ENCODE measurements at regions of chr1 and their contacts with region 1.

Region 1: GRCh38 chr1:27044613-27045151 is 32.0 kb upstream of the TENT5B start:
- DNase-seq: peak; percentile 77
- H3K27ac ChIP-seq: peak overlapping the region; percentile 18; the same call in 1 of the 2 replicates
- CTCF ChIP-seq: peak; percentile 91

Region 2: DNA sequence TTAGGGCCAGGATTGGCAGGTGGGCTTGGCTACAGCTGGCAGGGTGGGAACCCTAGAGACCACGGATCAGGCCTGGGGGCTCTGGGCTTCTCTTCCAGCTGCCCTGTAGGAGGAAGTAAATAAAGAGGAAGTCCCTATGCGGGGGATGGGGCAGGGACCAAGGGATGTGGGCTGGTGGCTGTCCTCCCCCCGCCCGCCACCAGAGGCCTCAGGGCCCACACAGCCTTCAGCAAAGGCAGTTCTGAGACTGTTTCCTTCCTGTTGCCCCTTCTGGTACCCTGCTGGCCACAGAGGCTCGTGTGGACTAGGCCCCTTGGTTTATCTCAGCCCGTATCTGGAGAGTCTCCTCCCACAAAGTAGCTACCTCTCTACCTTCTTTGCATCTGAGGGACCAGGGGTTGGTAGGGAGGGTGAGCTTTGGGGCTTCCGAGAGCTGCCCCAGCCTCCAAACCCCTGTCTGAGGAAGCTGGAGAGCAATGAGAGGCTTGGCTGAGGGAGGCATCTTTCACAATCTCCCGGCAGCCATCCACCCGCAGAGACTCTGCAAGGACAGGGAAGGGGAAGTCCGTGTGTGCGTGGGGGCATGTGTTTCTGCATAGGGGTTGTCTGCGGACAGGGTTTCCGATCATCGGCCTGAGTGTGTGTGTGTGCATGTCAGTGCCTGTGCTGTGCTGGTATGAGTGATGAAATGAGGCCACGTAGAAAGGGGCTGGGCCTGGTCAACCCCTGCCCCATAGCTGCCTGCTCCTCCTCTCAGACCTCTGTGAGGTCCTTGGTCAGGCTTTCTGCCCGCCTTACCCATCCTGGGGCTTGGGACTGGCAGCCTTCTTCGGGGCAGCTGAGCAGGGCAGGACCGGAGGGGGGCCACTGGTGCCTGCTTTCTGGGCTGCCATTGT is 502.6 kb before region 1 on chr1:
- CTCF ChIA-PET with region 1: no interaction called
- POLR2A ChIA-PET with region 1: no interaction called
- DNase-seq: peak; percentile 47
- H3K27ac ChIP-seq: peak overlapping the region; percentile 90
- CTCF ChIP-seq: no peak

Region 3: GRCh38 chr1:27031235-27032118 is 13.2 kb before region 1 on chr1:
- CTCF ChIA-PET with region 1: interaction called, 12 read pairs
- POLR2A ChIA-PET with region 1: no interaction called
- DNase-seq: peak; percentile 89
- H3K27ac ChIP-seq: peak overlapping the region; percentile 95
- CTCF ChIP-seq: no peak

Region 4: DNA sequence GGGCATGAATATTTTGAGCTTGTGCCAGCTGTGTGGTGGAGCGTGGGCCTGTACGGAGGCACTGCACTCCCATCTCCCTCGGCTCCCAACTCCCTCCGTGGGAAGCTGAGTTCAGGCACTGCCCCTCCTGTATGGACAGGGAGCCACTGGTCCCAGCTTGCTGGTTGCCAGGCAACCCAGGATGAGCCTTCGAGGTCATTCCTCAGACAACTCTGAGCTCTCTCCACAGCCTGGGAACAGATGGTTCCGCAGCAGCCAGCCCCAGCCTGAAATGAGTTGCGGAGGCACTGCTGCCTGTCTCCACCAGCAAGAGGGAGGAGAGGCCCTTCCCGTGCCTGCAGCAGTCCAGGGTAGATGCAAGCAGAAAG is 26.4 kb after region 1 on chr1:
- CTCF ChIA-PET with region 1: interaction called, 12 read pairs
- POLR2A ChIA-PET with region 1: no interaction called
- DNase-seq: peak; percentile 16
- H3K27ac ChIP-seq: peak overlapping the region; percentile 64
- CTCF ChIP-seq: no peak

Region 5: DNA sequence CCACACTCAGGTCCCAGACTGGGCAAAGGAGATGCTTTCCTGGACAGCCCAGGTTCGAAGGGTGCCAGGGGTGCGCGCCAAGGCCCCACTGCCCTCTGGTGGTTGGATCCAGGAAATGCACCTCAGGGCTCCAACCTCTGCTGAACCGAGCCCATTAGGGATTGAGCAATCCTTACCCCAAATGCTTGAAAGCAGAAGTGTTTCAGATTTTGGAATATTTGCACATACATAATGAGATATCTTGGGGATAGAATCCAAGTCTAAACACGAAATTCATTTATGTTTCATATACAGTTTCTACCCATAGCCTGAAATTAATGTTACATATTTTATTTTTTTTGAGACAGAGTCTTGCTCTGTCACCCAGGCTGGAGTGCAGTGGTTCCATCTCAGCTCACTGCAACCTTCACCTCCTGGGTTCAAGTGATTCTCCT is 52.8 kb after region 1 on chr1:
- CTCF ChIA-PET with region 1: interaction called, 166 read pairs
- POLR2A ChIA-PET with region 1: no interaction called
- DNase-seq: peak; percentile 90
- H3K27ac ChIP-seq: peak overlapping the region; percentile 96
- CTCF ChIP-seq: peak; percentile 97

Region 6: DNA sequence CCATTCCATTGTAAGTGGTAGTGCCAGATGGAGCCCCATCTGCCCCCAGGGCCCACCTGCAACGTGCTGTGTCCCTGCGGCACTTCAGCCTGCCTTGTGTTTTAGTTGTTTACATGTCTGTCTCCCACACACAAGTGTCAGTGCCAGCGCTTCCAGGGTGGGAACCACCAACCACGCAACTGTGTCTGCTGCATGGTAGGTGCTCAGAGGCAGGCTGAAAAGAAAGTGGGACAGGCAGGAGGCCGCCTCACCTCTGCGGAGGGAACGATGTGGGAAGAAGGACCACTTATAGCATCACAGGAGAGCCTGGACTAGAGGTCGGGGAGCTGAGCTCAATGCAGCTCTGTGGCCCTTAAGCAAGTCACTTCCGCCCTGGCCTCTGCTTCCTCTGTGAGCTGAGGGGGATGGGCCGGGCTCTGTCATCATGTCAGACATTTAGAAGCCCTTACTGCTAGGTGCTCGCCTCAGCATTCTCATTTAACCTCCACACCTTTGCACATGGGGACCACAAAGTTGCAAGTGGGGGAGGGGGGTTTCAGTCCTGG is 92.4 kb after region 1 on chr1:
- CTCF ChIA-PET with region 1: no interaction called
- POLR2A ChIA-PET with region 1: no interaction called
- DNase-seq: no peak
- H3K27ac ChIP-seq: peak overlapping the region; percentile 50
- CTCF ChIP-seq: no peak

Region 7: DNA sequence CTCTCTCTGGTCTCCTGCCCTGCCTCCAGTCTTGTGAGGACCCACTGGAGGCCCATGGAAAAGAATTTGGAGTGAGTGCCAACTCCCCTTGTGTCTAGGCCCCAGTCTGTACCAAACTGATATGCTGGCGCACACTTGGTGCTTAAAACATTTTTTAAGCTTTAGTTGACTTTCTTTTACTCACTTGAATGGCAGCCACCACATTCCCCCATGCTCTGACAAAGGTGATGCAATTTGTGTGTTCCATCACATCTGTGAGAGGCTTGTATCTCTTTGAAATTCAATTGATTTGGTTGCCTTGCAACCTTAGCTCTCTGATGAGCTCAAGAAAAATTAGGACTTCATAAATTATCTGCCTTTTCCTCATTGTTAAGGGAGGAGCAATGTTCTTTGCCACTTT is 159.3 kb after region 1 on chr1:
- CTCF ChIA-PET with region 1: no interaction called
- POLR2A ChIA-PET with region 1: no interaction called
- DNase-seq: no peak
- H3K27ac ChIP-seq: no peak overlapping the region
- CTCF ChIP-seq: no peak

Measured in RWPE1 (cell line).